Psoas muscle (tissue), 8 donors: ENCODE measurements at regions of chr2 and their contacts with region 1.

Region 1: DNA sequence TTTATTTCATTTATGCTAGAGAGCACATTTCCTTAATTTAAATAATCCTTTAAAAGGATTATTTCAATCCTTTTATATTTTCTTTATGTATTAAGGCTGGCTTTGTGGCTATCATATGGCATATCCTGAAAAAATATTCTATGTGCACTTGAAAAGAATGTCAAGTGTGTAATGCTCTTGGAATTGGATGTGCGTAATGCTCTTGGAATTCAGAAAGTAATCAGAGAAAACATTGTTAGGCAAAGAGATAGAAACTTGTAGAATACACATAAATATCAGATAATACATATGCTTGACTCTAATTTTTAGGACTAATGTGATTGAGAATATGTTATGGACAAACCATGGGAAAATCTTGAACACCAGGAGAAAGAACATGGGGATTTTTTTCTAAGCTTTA is 197.5 kb upstream of the COL3A1 start:
- DNase-seq: no peak
- ATAC-seq: no peak
- H3K4me3 ChIP-seq: no peak overlapping the region
- H3K27ac ChIP-seq: no peak overlapping the region
- H3K4me1 ChIP-seq: no peaks in the 10 kb centered on the region
- H3K27me3 ChIP-seq: no peaks in the 10 kb centered on the region
- CTCF ChIP-seq: no peak

Region 2: DNA sequence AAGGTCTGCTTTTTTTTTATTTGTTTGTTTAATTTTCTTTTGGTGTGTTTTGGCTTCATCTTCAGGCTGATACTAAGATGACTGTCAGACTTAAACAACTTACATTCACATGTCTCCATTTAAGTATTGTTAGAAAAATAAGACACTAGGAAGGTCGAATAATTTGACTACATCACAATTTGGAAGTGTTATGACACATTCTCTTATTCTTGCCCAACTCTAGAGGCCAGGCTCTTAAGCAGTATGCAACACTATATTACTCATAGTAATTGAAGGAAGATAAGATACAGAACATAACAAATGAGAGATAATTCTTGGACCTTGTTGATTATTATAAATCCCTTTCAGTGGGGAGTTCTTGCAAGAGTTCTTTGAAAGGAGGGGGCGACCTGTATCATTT is 97.8 kb before region 1 on chr2:
- intact Hi-C with region 1: loop called in 1 of 2 experiments (anchors 10 kb)
- DNase-seq: no peak
- ATAC-seq: no peak
- H3K4me3 ChIP-seq: no peak overlapping the region
- H3K27ac ChIP-seq: no peak overlapping the region
- H3K4me1 ChIP-seq: no peaks in the 10 kb centered on the region
- H3K27me3 ChIP-seq: no peaks in the 10 kb centered on the region
- CTCF ChIP-seq: no peak

Region 3: DNA sequence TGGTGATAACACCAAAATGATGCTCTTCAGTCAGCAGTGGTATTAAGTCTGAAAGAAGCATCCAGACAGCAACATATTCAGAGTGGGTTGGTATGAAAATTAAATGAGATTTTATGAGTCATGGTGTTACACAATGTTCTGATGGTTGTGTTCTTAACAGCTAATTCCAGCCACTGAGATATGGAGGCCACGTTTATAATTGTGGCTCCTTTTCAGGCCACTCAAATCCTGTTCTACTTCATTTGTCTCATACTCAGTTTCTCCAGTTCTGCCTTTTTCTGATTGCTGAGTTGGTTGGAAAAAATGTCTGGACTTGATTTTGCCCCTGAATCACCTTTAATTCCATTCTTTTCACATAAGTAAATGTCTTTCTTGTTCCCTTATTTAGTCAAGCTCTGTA is 34.9 kb after region 1 on chr2:
- intact Hi-C with region 1: no loop called
- DNase-seq: no peak
- ATAC-seq: peak in 1 of 4 donors; percentile 41
- H3K4me3 ChIP-seq: no peak overlapping the region
- H3K27ac ChIP-seq: no peak overlapping the region
- H3K4me1 ChIP-seq: no peaks in the 10 kb centered on the region
- H3K27me3 ChIP-seq: no peaks in the 10 kb centered on the region
- CTCF ChIP-seq: no peak

Region 4: GRCh38 chr2:189391201-189391600 is 614.6 kb after region 1 on chr2:
- intact Hi-C with region 1: no loop called
- DNase-seq: no peak
- ATAC-seq: no peak
- H3K4me3 ChIP-seq: no peak overlapping the region
- H3K27ac ChIP-seq: no peak overlapping the region
- H3K4me1 ChIP-seq: no peaks in the 10 kb centered on the region
- H3K27me3 ChIP-seq: no peaks in the 10 kb centered on the region
- CTCF ChIP-seq: no peak